ENCODE measurements at regions of chr2 and their contacts with region 1.

Region 1: DNA sequence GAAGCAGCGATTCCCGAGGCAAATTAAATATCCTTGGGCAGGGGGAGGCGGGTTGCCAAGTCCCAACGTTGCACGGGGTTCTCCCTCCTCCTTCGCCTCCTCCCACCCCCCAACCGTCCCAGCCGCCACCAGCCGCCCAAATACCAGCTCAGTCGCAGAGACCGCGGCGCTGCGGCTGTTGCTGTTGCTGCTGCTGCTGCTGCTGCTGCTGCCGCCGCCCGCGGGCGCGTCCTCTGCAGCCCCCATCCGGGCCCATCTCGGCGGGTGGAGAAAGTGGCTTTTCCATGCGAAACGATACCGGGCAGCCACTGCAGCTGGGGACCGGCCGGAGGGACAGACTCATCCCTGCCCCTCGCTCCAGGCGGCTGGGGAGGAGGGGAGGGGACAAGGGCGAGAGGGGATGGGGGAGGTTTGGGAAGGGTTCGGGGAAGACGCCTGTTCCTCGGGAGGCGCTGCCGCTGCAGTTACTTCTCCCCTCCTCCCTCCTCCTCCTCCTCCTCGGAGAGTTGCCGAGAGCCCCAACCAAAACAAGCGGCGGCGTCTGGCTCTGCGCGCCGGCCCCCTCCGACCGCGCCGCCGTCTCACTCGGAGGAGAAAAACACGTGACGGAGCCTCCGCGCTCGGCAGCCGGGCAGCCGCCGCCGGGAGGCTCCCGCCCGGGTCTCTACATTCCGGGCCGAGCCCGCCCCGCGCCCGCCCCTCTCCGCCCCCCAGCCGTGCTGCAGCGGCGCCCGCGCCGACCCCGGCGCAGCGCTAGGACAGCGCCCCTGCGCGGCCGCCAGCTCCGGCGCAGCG is at the start of gene IRS1:
- DNase-seq: peak; percentile 32 to 84 (median 68)
- ATAC-seq: peak; percentile 65
- H3K4me3 ChIP-seq: peak within 1 kb of the TSS; percentile 70 to 90
- H3K4me3 Mint-ChIP-seq: peak within 1 kb of the TSS; percentile 92
- H3K27ac ChIP-seq: peak within 1 kb of the TSS; percentile 43 to 51
- H3K27ac Mint-ChIP-seq: peak within 1 kb of the TSS; percentile 53
- H3K4me1 ChIP-seq: peaks cover 26% of the 10 kb centered on the region
- H3K4me1 Mint-ChIP-seq: peaks cover 39% of the 10 kb centered on the region
- H3K27me3 ChIP-seq: peaks cover 0 to 4% of the 10 kb centered on the region in 2 experiments
- H3K27me3 Mint-ChIP-seq: peaks cover 2% of the 10 kb centered on the region
- CTCF ChIP-seq: peak; percentile 17
- total RNA-seq, gene IRS1: 5.6 to 5.9 TPM

Region 2: GRCh38 chr2:225668606-225669266 is 1130.6 kb before region 1 on chr2:
- CTCF ChIA-PET with region 1: interaction called, 6 read pairs
- POLR2A ChIA-PET with region 1: interaction called, 3 read pairs
- intact Hi-C with region 1: loop called (anchors 1 to 2 kb)
- DNase-seq: peak in 3 of 9 experiments; percentile 17 to 67 (median 52)
- ATAC-seq: peak; percentile 68
- H3K4me3 ChIP-seq: no peak overlapping the region
- H3K4me3 Mint-ChIP-seq: no peak overlapping the region
- H3K27ac ChIP-seq: no peak overlapping the region
- H3K27ac Mint-ChIP-seq: no peak overlapping the region
- H3K4me1 ChIP-seq: no peaks in the 10 kb centered on the region
- H3K4me1 Mint-ChIP-seq: no peaks in the 10 kb centered on the region
- H3K27me3 ChIP-seq: no peaks in the 10 kb centered on the region
- H3K27me3 Mint-ChIP-seq: peaks cover 7% of the 10 kb centered on the region
- CTCF ChIP-seq: peak; percentile 74

Region 3: DNA sequence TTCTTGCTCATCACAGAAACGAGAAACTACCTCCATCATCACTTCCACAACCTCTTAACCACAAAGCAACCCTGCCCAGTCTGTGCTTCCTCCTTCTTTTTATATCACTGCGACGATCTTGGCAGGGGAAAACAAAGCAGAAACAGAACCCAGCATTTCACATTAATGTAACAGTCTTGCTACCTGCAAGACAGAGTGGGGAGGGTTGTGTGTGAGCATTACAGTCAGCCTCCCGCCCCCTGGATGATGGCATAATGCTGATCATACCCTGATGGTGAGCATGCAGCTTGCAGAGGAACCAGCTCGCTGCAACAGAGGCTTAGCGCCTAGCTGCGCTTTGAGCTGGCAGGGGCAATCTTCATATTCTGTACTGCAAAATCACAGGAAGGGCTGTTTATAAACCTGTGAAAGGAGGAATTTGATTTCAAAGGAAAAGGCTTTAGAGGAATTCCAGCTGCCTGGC is 375.8 kb before region 1 on chr2:
- CTCF ChIA-PET with region 1: interaction called, 3 read pairs
- POLR2A ChIA-PET with region 1: no interaction called
- intact Hi-C with region 1: loop called in 1 of 2 experiments (anchors 10 kb)
- DNase-seq: peak in 7 of 9 experiments; percentile 2 to 54 (median 22)
- ATAC-seq: peak; percentile 63
- H3K4me3 ChIP-seq: peak overlapping the region; percentile 23 to 36
- H3K4me3 Mint-ChIP-seq: peak overlapping the region; percentile 62
- H3K27ac ChIP-seq: no peak overlapping the region
- H3K27ac Mint-ChIP-seq: peak overlapping the region; percentile 38
- H3K4me1 ChIP-seq: peaks cover 13% of the 10 kb centered on the region
- H3K4me1 Mint-ChIP-seq: peaks cover 12% of the 10 kb centered on the region
- H3K27me3 ChIP-seq: no peaks in the 10 kb centered on the region
- H3K27me3 Mint-ChIP-seq: no peaks in the 10 kb centered on the region
- CTCF ChIP-seq: no peak

Region 4: DNA sequence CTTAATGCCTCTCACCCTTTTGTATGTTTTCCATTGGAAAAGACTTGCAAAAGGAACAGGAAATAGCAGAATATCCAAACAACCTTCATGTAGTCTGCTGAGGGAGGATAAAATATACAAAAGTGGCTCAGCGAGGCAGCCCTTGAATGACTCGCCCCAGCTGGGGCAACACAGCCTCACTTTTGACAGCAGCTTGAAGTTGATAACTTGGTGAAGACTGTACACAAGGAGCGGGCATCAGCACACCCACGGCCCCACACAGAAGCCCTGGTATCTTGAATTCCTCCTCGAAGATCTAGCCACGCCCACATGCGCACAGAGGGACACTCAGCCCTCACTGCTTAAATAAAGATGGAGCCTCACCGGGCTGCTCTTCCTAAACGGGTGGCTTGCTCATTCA is 160.8 kb before region 1 on chr2:
- CTCF ChIA-PET with region 1: no interaction called
- POLR2A ChIA-PET with region 1: no interaction called
- intact Hi-C with region 1: no loop called
- DNase-seq: no peak
- ATAC-seq: no peak
- H3K4me3 ChIP-seq: no peak overlapping the region
- H3K4me3 Mint-ChIP-seq: no peak overlapping the region
- H3K27ac ChIP-seq: no peak overlapping the region
- H3K27ac Mint-ChIP-seq: no peak overlapping the region
- H3K4me1 ChIP-seq: no peaks in the 10 kb centered on the region
- H3K4me1 Mint-ChIP-seq: no peaks in the 10 kb centered on the region
- H3K27me3 ChIP-seq: no peaks in the 10 kb centered on the region
- H3K27me3 Mint-ChIP-seq: peaks cover 7% of the 10 kb centered on the region
- CTCF ChIP-seq: no peak

Region 5: GRCh38 chr2:226649871-226650660 is 149.3 kb before region 1 on chr2:
- CTCF ChIA-PET with region 1: interaction called, 3 read pairs
- POLR2A ChIA-PET with region 1: no interaction called
- intact Hi-C with region 1: loop called in 1 of 2 experiments (anchors 2 kb)
- DNase-seq: peak in 8 of 9 experiments; percentile 17 to 67 (median 40)
- ATAC-seq: peak; percentile 92
- H3K4me3 ChIP-seq: no peak overlapping the region
- H3K4me3 Mint-ChIP-seq: peak overlapping the region; percentile 13
- H3K27ac ChIP-seq: peak overlapping the region in 1 of 2 experiments; percentile 28
- H3K27ac Mint-ChIP-seq: peak overlapping the region; percentile 66
- H3K4me1 ChIP-seq: peaks cover 13% of the 10 kb centered on the region
- H3K4me1 Mint-ChIP-seq: peaks cover 20% of the 10 kb centered on the region
- H3K27me3 ChIP-seq: no peaks in the 10 kb centered on the region
- H3K27me3 Mint-ChIP-seq: peaks cover 5% of the 10 kb centered on the region
- CTCF ChIP-seq: no peak

Region 6: DNA sequence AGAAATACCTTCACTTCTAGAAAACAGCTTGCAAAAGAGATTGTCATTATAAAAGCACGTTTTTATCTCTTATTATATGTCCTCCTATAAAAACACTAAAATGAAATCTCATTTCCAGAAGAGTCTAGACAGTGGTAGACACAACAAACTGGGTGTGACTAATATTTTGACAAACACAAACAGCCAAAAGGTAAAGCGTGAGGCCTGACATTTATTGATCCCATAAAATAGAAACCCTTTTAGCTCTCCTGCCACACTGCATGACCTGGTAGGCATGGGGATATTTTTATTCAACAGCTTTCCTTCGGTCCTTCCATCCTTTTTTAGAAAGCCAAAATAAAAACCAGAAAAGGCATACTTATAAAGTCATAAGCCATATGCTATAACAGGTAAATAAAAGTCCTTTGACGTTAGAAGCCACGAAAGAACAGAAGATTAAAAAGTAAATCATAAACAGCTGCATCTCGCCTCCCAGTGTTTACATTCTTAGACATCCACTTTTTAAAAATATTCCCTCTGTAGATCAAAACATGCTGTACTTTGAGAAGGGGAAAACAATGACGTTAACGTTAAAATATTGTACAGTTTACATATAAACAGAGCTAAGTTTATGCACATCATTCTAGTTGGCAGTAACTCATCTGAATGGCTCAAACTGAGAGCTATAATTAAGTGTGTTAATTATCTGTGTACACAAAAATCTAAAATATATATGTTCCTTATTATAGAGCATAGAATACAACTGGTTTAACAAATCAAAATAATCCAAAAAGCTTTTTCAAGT is 44.4 kb before region 1 on chr2:
- CTCF ChIA-PET with region 1: no interaction called
- POLR2A ChIA-PET with region 1: no interaction called
- intact Hi-C with region 1: no loop called
- DNase-seq: no peak
- ATAC-seq: no peak
- H3K4me3 ChIP-seq: no peak overlapping the region
- H3K4me3 Mint-ChIP-seq: no peak overlapping the region
- H3K27ac ChIP-seq: no peak overlapping the region
- H3K27ac Mint-ChIP-seq: no peak overlapping the region
- H3K4me1 ChIP-seq: no peaks in the 10 kb centered on the region
- H3K4me1 Mint-ChIP-seq: no peaks in the 10 kb centered on the region
- H3K27me3 ChIP-seq: no peaks in the 10 kb centered on the region
- H3K27me3 Mint-ChIP-seq: no peaks in the 10 kb centered on the region
- CTCF ChIP-seq: no peak

Region 7: GRCh38 chr2:226984750-226985582 is 185.6 kb after region 1 on chr2:
- CTCF ChIA-PET with region 1: interaction called, 7 read pairs
- POLR2A ChIA-PET with region 1: no interaction called
- intact Hi-C with region 1: loop called (anchors 5 kb)
- DNase-seq: peak in 3 of 9 experiments; percentile 14 to 53 (median 33)
- ATAC-seq: peak; percentile 77
- H3K4me3 ChIP-seq: no peak overlapping the region
- H3K4me3 Mint-ChIP-seq: no peak overlapping the region
- H3K27ac ChIP-seq: no peak overlapping the region
- H3K27ac Mint-ChIP-seq: peak overlapping the region; percentile 79
- H3K4me1 ChIP-seq: peaks cover 14% of the 10 kb centered on the region
- H3K4me1 Mint-ChIP-seq: peaks cover 21% of the 10 kb centered on the region
- H3K27me3 ChIP-seq: no peaks in the 10 kb centered on the region
- H3K27me3 Mint-ChIP-seq: no peaks in the 10 kb centered on the region
- CTCF ChIP-seq: peak; percentile 46

Region 8: GRCh38 chr2:227423656-227424499 is 624.5 kb after region 1 on chr2:
- CTCF ChIA-PET with region 1: no interaction called
- POLR2A ChIA-PET with region 1: no interaction called
- intact Hi-C with region 1: no loop called
- DNase-seq: no peak
- ATAC-seq: no peak
- H3K4me3 ChIP-seq: no peak overlapping the region
- H3K4me3 Mint-ChIP-seq: no peak overlapping the region
- H3K27ac ChIP-seq: no peak overlapping the region
- H3K27ac Mint-ChIP-seq: no peak overlapping the region
- H3K4me1 ChIP-seq: no peaks in the 10 kb centered on the region
- H3K4me1 Mint-ChIP-seq: no peaks in the 10 kb centered on the region
- H3K27me3 ChIP-seq: no peaks in the 10 kb centered on the region
- H3K27me3 Mint-ChIP-seq: no peaks in the 10 kb centered on the region
- CTCF ChIP-seq: no peak

Measured in CD8-positive, alpha-beta T cell (primary cell).